Right ventricle myocardium inferior (tissue), 1 donor: ENCODE measurements at regions of chr3 and their contacts with region 1.

Region 1: GRCh38 chr3:192637803-192638202 is 89.5 kb downstream of the FGF12 start:
- DNase-seq: no peak
- ATAC-seq: no peak

Region 2: DNA sequence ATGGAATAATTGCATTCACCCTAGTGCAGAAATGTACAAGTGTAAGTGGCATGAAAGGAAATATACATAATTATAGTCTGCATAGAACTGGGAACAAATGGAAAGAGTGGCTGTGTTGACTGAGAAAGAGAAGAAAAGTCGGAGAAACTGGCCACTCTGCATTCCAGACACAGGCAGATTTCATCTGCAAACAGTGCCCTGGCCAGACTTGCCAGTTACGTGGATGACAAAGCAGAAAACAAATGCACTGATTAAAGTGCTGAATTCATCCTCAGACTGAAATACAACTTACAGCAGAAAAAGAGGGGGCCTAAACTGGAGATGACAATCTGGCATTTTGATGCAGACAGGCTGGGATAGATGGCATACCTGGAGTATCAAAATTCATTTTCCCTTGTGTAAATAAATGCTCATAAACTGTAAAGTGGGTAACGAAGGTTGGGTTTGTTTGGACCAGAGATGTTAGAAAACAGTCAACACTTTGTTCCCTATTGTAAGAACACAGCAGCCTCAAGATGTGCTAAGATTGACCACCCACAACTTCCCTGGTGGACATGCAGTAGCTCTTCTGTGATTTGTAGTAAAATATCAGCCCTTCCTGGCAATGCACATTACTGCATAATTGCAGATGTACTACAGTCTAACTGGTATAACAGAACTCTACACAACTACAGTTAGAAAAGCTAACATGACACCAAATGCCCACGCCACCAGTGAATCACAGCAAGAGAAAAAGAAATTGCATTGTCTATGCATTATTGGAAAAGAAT is 40.1 kb before region 1 on chr3:
- intact Hi-C with region 1: no loop called
- DNase-seq: no peak
- ATAC-seq: peak; percentile 32

Region 3: DNA sequence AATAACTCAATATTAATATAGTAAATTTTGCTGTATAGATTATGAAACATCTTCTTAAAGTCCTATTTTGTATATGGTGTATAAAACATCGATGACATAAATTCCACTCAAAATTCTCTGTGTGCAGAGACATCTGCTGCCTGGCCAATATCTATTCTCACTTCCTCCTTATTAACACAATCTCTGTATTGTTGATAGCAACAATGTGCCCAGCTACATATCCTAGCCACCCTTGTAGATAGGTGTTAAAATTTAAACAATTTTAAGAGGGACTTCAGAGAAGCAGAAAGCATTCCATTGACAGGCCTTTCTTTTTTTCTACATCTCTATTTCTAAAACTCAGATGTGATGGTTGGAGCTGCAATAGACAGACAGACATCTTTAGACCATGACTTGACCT is 17.2 kb after region 1 on chr3:
- intact Hi-C with region 1: loop called (anchors 1 kb)
- DNase-seq: no peak
- ATAC-seq: peak; percentile 69

Region 4: DNA sequence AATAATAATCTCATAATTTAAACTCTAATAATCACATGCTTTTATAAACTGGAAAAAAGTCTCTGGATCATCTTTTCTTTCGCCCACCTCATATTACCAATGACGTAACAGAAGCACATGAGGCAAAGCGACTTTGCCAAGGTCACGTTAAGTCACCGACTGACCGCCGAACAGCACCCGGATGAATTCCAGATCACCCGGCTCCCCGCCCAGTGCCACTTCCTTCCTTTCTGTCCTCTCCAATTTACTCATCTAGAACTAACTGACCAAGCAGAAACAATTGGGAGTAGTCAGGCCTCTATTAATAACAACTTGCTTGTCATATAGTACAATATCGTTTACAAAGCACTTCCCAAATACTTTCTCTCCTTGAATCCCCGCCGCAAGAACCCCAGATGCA is 68.5 kb after region 1 on chr3:
- intact Hi-C with region 1: loop called (anchors 5 kb)
- DNase-seq: no peak
- ATAC-seq: peak; percentile 84

Region 5: GRCh38 chr3:192727032-192727847 is 89.4 kb after region 1 on chr3 and contains the start of gene FGF12:
- intact Hi-C with region 1: loop called (anchors 5 kb)
- DNase-seq: peak; percentile 80
- ATAC-seq: peak; percentile 93
- total RNA-seq, gene FGF12: 340 TPM

Region 6: GRCh38 chr3:192772240-192772894 is 134.6 kb after region 1 on chr3:
- intact Hi-C with region 1: loop called (anchors 5 kb)
- DNase-seq: no peak
- ATAC-seq: peak; percentile 80